Activated CD8-positive, alpha-beta T cell treated with anti-CD3 and anti-CD28 coated beads for 36 hours (primary cell): ENCODE measurements at regions of chr6 and their contacts with region 1.

Region 1: DNA sequence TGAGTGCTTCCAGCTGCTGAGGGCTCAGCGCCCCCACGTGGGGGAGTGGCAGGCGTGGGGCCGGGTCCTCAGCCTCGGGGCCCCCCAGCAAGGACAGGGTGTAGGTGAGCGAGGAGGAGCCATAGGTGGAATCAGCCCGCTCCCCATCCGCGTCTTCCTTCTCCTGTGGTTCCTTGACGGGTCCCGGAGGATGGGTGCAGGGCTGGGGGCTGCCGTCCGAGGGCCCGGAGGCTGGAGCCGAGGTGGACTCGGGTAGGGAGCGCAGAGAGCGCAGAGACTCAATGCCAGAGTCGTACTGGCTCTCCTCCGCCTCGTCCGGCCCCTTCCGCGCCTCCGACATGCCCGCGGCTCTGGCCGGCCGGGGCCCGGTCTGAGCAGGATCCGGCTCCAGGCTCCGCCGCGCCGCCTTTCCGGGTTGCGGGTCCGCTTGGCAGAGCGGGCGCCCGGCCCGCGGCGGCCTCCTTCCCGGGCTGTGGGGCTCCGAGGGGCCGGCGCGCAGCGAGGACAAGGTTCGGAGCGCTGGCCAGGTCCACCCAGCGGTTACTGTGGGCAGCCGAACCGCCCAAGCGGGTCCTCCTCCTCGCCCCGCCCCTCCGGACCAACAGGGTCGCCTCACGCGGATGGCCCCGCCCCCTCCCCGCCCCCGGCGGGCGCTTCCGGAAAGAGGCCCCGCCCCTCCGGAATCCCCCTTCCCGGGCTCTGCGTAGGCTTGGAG is at the start of gene NFKBIE:
- DNase-seq: peak; percentile 96
- ATAC-seq: peak; percentile 70
- H3K4me3 Mint-ChIP-seq: peak within 1 kb of the TSS; percentile 95
- H3K27ac Mint-ChIP-seq: peak within 1 kb of the TSS; percentile 95
- H3K4me1 Mint-ChIP-seq: peaks cover 51% of the 10 kb centered on the region
- H3K27me3 Mint-ChIP-seq: peaks cover 16% of the 10 kb centered on the region
- CTCF ChIP-seq: peak; percentile 49
- total RNA-seq, gene NFKBIE: 13.3 to 17.9 TPM

Region 2: GRCh38 chr6:44028789-44029310 is 236.3 kb before region 1 on chr6:
- CTCF ChIA-PET with region 1: no interaction called
- POLR2A ChIA-PET with region 1: no interaction called
- intact Hi-C with region 1: no loop called
- DNase-seq: no peak
- ATAC-seq: no peak
- H3K4me3 Mint-ChIP-seq: no peak overlapping the region
- H3K27ac Mint-ChIP-seq: no peak overlapping the region
- H3K4me1 Mint-ChIP-seq: no peaks in the 10 kb centered on the region
- H3K27me3 Mint-ChIP-seq: peaks cover 9% of the 10 kb centered on the region
- CTCF ChIP-seq: no peak

Region 3: DNA sequence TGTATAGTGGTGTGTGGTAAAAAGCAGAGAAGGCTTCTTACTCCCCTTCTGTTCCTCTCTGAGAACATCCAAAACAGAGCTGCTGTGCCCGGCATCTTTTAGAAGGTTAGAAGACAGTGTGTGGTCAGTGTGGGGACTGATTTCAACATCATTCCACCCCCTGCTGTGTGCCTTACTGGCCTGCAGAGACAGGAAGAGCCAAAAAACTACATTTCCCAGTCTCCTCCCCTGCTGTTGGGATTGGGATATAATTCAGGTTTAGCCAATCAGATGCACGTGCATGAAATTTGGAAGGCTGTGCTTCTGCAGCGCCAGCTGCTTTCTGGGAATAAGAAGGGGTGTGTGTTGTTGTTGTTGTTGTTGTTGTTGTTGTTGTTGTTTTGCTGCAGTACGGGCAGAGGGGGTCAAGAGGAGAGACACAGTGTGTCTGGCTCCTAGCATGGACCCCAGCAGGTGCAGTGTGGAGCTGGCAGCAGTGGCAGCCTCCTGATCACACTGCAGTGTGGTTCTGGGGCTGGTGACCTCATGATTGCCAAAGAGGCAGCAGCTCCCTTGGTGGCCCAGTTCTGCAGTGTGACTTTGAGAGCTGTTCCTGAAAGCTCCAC is 212.6 kb before region 1 on chr6:
- CTCF ChIA-PET with region 1: no interaction called
- POLR2A ChIA-PET with region 1: no interaction called
- intact Hi-C with region 1: no loop called
- DNase-seq: no peak
- ATAC-seq: no peak
- H3K4me3 Mint-ChIP-seq: no peak overlapping the region
- H3K27ac Mint-ChIP-seq: no peak overlapping the region
- H3K4me1 Mint-ChIP-seq: peaks cover 8% of the 10 kb centered on the region
- H3K27me3 Mint-ChIP-seq: peaks cover 2% of the 10 kb centered on the region
- CTCF ChIP-seq: no peak

Region 4: GRCh38 chr6:44251576-44252524 is 13.3 kb before region 1 on chr6:
- CTCF ChIA-PET with region 1: interaction called, 13 read pairs
- POLR2A ChIA-PET with region 1: interaction called, 486 read pairs
- intact Hi-C with region 1: no loop called
- DNase-seq: no peak
- ATAC-seq: no peak
- H3K4me3 Mint-ChIP-seq: peak overlapping the region; percentile 100
- H3K27ac Mint-ChIP-seq: peak overlapping the region; percentile 62
- H3K4me1 Mint-ChIP-seq: peaks cover 72% of the 10 kb centered on the region
- H3K27me3 Mint-ChIP-seq: peaks cover 2% of the 10 kb centered on the region
- CTCF ChIP-seq: no peak

Region 5: GRCh38 chr6:44297063-44298038 is 32.2 kb after region 1 on chr6:
- CTCF ChIA-PET with region 1: interaction called, 182 read pairs
- POLR2A ChIA-PET with region 1: interaction called, 10 read pairs
- intact Hi-C with region 1: no loop called
- DNase-seq: peak; percentile 67
- ATAC-seq: peak; percentile 90
- H3K4me3 Mint-ChIP-seq: peak overlapping the region; percentile 53
- H3K27ac Mint-ChIP-seq: peak overlapping the region; percentile 15
- H3K4me1 Mint-ChIP-seq: peaks cover 11% of the 10 kb centered on the region
- H3K27me3 Mint-ChIP-seq: peaks cover 31% of the 10 kb centered on the region
- CTCF ChIP-seq: no peak

Region 6: GRCh38 chr6:44312901-44313788 is 48.0 kb after region 1 on chr6 and contains the start of gene AARS2:
- CTCF ChIA-PET with region 1: interaction called, 182 read pairs
- POLR2A ChIA-PET with region 1: interaction called, 4 read pairs
- intact Hi-C with region 1: no loop called
- DNase-seq: peak; percentile 95
- ATAC-seq: peak; percentile 97
- H3K4me3 Mint-ChIP-seq: peak within 1 kb of the TSS; percentile 90
- H3K27ac Mint-ChIP-seq: peak within 1 kb of the TSS; percentile 83
- H3K4me1 Mint-ChIP-seq: peaks cover 16% of the 10 kb centered on the region
- H3K27me3 Mint-ChIP-seq: no peaks in the 10 kb centered on the region
- CTCF ChIP-seq: peak; percentile 91
- total RNA-seq, gene AARS2: 16.2 to 16.3 TPM

Region 7: DNA sequence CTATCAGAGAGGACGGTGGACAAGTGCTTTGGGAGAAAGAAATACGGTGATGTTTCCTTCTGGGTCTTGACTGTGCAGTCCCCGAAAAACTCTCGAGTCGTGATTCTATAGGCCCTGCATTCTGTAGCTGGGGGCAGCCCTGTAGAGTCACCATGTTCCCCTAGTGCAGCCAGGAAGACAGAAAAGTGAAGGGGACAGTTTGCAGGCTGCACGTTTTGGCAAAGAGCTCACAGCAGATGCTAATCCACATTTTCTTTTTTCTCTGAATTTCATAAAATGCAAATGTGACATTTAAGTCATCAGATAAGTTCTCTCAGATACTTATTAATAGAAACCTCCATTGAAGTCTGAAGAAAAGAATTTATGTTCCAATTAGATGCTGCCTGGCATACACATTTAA is 96.8 kb after region 1 on chr6:
- CTCF ChIA-PET with region 1: no interaction called
- POLR2A ChIA-PET with region 1: no interaction called
- intact Hi-C with region 1: no loop called
- DNase-seq: no peak
- ATAC-seq: no peak
- H3K4me3 Mint-ChIP-seq: no peak overlapping the region
- H3K27ac Mint-ChIP-seq: no peak overlapping the region
- H3K4me1 Mint-ChIP-seq: no peaks in the 10 kb centered on the region
- H3K27me3 Mint-ChIP-seq: peaks cover 5% of the 10 kb centered on the region
- CTCF ChIP-seq: no peak

Region 8: DNA sequence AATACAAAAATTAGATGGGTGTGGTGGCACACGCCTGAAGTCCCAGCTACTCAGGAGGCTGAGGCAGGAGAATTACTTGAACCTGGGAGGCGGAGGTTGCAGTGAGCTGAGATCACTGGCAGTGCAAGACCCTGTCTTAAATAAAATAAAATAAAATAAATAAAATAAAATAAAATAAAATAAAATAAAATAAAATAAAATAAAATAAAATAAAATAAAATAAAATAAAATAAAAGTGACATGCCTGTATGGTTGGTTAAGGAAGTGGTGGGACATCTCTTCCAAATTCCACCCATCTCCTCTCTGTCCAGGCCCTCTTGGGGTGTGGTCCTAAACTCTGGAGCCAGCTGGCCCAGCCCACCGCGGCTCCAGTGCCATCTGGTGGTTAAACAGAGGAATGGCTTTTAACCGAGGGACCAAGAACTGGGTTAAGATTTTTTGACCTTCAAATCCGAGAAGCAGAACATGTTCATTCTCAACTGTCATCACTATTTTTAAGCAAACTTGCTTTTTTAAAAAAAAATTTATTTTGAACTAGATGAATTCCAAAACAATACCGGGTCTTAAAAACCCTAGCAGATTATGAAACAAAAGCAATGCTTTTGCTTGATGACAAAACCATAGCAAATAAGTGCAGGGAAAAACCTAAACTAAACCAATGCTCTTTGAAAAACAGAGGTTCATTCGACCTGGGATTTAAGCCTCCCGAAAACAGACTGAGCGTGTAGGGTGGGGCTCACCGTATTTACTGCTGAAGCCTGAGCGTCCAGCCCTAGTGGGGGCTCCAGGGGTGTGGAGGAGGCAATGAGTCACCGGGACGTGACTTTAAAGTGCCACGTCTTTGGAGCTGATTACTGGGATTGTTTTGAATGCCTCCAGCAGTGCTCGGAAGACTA is 191.2 kb after region 1 on chr6:
- CTCF ChIA-PET with region 1: interaction called, 19 read pairs
- POLR2A ChIA-PET with region 1: no interaction called
- intact Hi-C with region 1: loop called (anchors 5 kb)
- DNase-seq: peak; percentile 46
- ATAC-seq: peak; percentile 87
- H3K4me3 Mint-ChIP-seq: no peak overlapping the region
- H3K27ac Mint-ChIP-seq: no peak overlapping the region
- H3K4me1 Mint-ChIP-seq: peaks cover 1% of the 10 kb centered on the region
- H3K27me3 Mint-ChIP-seq: peaks cover 6% of the 10 kb centered on the region
- CTCF ChIP-seq: peak; percentile 85